Caco-2 (cell line): ENCODE measurements at regions of chr13 and their contacts with region 1.

Region 1: DNA sequence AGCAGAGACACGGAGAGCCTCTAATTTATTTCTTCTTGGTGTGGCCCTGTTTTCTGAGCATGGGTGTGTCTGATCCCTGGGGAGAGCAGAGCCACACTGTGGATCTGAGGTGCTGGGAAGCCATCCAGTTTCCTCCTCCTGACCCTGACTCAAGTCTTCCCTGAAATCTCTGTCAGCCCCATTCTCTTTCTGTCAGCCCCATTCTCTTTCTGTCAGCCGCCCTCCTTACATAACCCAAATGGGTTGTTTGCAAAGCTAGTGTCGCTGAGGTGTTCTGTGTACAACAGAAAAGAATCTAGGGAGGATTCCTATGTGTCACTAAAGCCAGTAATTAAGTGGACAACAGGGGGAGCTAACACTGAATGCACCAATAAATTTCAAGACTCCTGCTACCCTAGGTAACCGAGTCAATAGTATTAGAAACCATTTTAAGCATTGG is 50.2 kb downstream of the LRCH1 start:
- DNase-seq: peak; percentile 44 to 64
- H3K4me3 ChIP-seq: no peak overlapping the region
- H3K4me3 Mint-ChIP-seq: peak overlapping the region; percentile 22
- H3K27ac Mint-ChIP-seq: peak overlapping the region; percentile 88
- H3K4me1 ChIP-seq: peaks cover 93% of the 10 kb centered on the region
- H3K4me1 Mint-ChIP-seq: peaks cover 73% of the 10 kb centered on the region
- H3K27me3 ChIP-seq: no peaks in the 10 kb centered on the region
- H3K27me3 Mint-ChIP-seq: no peaks in the 10 kb centered on the region
- CTCF ChIP-seq: peak; percentile 54 to 60

Region 2: DNA sequence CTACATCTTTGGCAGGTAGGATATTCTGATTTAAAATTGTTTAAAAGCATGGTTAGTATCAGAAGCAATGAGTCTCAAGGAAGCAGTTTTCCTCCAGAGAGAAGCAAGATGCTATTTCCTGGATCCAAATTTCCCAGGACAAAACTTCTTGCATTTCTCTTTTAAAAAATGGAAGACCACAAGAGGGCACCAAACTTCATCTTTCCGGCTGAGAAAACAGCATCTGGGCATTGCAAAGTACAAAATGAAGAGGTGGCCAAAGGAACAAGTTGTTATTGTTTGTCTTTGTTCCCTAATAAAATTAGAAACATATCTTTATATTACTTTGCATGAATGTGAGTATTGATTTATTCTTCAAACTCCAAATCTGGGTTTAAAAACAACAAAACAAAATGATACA is 110.2 kb before region 1 on chr13:
- CTCF ChIA-PET with region 1: interaction called, 6 read pairs
- POLR2A ChIA-PET with region 1: no interaction called
- intact Hi-C with region 1: loop called (anchors 5 kb)
- DNase-seq: peak in 1 of 2 experiments; percentile 72
- H3K4me3 ChIP-seq: no peak overlapping the region
- H3K4me3 Mint-ChIP-seq: no peak overlapping the region
- H3K27ac Mint-ChIP-seq: no peak overlapping the region
- H3K4me1 ChIP-seq: peaks cover 32% of the 10 kb centered on the region
- H3K4me1 Mint-ChIP-seq: peaks cover 36% of the 10 kb centered on the region
- H3K27me3 ChIP-seq: no peaks in the 10 kb centered on the region
- H3K27me3 Mint-ChIP-seq: no peaks in the 10 kb centered on the region
- CTCF ChIP-seq: peak; percentile 63 to 65

Region 3: GRCh38 chr13:46617229-46617788 is 14.1 kb after region 1 on chr13:
- CTCF ChIA-PET with region 1: no interaction called
- POLR2A ChIA-PET with region 1: no interaction called
- intact Hi-C with region 1: loop called (anchors 1 kb)
- DNase-seq: no peak
- H3K4me3 ChIP-seq: no peak overlapping the region
- H3K4me3 Mint-ChIP-seq: no peak overlapping the region
- H3K27ac Mint-ChIP-seq: peak overlapping the region; percentile 11
- H3K4me1 ChIP-seq: peaks cover 84% of the 10 kb centered on the region
- H3K4me1 Mint-ChIP-seq: peaks cover 60% of the 10 kb centered on the region
- H3K27me3 ChIP-seq: no peaks in the 10 kb centered on the region
- H3K27me3 Mint-ChIP-seq: no peaks in the 10 kb centered on the region
- CTCF ChIP-seq: no peak

Region 4: GRCh38 chr13:46655377-46656180 is 52.4 kb after region 1 on chr13:
- CTCF ChIA-PET with region 1: interaction called, 5 read pairs
- POLR2A ChIA-PET with region 1: no interaction called
- intact Hi-C with region 1: loop called (anchors 1 kb)
- DNase-seq: peak; percentile 70 to 78
- H3K4me3 ChIP-seq: no peak overlapping the region
- H3K4me3 Mint-ChIP-seq: no peak overlapping the region
- H3K27ac Mint-ChIP-seq: peak overlapping the region; percentile 65
- H3K4me1 ChIP-seq: peaks cover 58% of the 10 kb centered on the region
- H3K4me1 Mint-ChIP-seq: peaks cover 35% of the 10 kb centered on the region
- H3K27me3 ChIP-seq: no peaks in the 10 kb centered on the region
- H3K27me3 Mint-ChIP-seq: no peaks in the 10 kb centered on the region
- CTCF ChIP-seq: no peak

Region 5: GRCh38 chr13:46668302-46668720 is 65.1 kb after region 1 on chr13:
- CTCF ChIA-PET with region 1: no interaction called
- POLR2A ChIA-PET with region 1: no interaction called
- intact Hi-C with region 1: loop called (anchors 1 kb)
- DNase-seq: no peak
- H3K4me3 ChIP-seq: no peak overlapping the region
- H3K4me3 Mint-ChIP-seq: no peak overlapping the region
- H3K27ac Mint-ChIP-seq: no peak overlapping the region
- H3K4me1 ChIP-seq: peaks cover 41% of the 10 kb centered on the region
- H3K4me1 Mint-ChIP-seq: peaks cover 37% of the 10 kb centered on the region
- H3K27me3 ChIP-seq: no peaks in the 10 kb centered on the region
- H3K27me3 Mint-ChIP-seq: no peaks in the 10 kb centered on the region
- CTCF ChIP-seq: no peak

Region 6: DNA sequence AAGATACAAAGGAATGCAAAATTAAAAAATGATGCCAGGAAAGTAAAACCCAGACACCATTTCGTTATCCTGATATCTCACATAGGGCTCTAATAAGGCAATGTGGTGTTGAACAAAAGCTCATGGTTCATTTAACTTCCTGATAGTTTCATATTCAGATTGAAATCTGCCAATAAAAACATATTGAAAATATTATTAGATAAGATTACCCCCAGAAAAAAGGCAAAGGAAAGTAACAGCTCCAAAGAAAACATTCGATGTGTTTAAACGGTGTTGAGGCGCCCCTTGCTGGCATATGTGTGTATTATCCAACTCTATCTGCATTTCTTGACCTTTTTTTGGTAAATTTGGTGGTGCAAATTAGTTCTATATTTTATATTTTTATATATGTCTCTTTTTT is 117.9 kb after region 1 on chr13:
- CTCF ChIA-PET with region 1: interaction called, 6 read pairs
- POLR2A ChIA-PET with region 1: no interaction called
- intact Hi-C with region 1: loop called (anchors 2 kb)
- DNase-seq: peak in 1 of 2 experiments; percentile 53
- H3K4me3 ChIP-seq: no peak overlapping the region
- H3K4me3 Mint-ChIP-seq: no peak overlapping the region
- H3K27ac Mint-ChIP-seq: no peak overlapping the region
- H3K4me1 ChIP-seq: peaks cover 29% of the 10 kb centered on the region
- H3K4me1 Mint-ChIP-seq: peaks cover 14% of the 10 kb centered on the region
- H3K27me3 ChIP-seq: no peaks in the 10 kb centered on the region
- H3K27me3 Mint-ChIP-seq: no peaks in the 10 kb centered on the region
- CTCF ChIP-seq: peak; percentile 61 to 74